Prostate gland (tissue), 2 donors: ENCODE measurements at regions of chr6 and their contacts with region 1.

Region 1: DNA sequence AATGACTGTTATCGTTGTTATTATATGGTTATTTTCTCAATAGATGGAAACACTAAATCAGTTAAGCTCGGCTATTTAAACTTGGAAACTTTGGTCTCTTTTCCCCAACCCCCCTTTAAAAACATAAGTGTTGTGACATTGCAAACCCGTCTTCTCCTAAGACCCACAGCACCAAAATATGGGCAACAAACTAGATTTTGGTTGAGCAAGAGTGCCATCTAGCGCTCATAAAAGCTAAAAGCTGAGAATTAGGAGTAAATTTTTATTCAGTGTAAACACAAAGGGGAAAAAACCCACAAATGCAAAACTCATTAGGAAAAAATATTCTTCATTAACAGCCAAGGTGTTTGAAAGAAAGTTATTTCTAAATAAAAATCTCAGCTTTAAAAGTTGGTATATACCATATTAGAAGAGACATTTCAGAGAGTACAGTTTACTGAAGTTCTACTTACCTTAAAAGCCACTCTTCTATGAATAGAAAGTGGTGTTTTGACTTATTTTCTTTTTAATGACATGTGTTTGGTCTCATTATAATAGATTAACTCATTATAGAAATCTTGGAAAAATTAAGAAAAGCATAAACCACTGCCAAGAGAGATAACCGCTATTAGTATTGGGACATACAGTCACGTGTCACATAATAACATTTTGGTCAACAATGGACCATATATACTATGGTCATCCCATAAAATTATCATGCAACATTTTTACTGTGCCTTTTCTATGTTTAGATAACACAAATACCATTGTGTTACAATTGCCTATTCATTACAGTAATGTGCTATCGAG is 21.1 kb downstream of the SESN1 start:
- DNase-seq: peak; percentile 54
- H3K4me3 ChIP-seq: no peak overlapping the region
- H3K27ac ChIP-seq: no peak overlapping the region
- H3K4me1 ChIP-seq: no peaks in the 10 kb centered on the region
- H3K27me3 ChIP-seq: no peaks in the 10 kb centered on the region
- CTCF ChIP-seq: peak in 3 of 4 experiments; percentile 54 to 74 (median 69)
- POLR2A ChIP-seq: no peak

Region 2: DNA sequence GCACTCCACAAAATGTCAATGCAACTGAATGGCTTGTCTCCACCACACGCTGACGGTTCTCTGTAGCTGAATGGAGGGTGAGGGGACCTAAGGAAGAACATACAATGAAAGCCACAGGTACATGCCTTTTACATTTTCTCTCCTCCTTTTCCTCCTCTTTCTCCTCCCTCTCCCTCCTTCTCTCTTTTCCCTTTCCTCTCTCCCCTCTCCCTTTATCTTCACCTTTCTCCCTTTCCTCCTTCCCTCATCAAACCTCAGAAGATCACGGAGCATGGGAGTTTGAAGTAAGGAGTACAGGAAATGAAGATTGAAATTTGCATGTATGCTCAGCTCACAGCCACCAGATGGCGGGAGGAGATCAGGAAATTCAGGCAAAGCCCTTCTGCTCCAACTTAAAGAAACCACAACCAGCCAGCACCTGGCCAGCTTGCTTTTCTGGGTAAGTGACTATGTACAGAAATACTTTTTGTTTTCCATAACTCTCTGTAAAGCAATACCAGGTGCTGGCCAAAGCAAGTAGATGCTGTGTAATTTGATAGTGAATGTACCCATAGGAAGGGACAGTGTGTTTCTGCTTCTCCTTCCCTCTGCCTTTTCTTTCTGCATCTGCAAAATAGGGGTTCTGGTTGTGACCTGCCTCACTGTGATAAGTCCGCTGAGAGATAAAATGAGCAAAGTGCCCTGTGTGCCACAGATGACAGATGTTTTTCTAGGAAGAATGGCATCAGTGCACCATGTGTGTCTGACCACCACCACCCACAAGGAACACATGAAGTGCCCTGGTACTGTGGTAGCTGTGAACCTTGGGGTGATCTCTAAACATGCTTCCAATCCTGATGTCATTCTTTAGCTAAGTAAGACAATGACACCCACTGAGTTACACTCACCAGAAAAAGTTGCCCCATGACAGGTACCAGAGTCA is 531.4 kb before region 1 on chr6:
- intact Hi-C with region 1: loop called (anchors 5 kb)
- DNase-seq: peak; percentile 77
- H3K4me3 ChIP-seq: no peak overlapping the region
- H3K27ac ChIP-seq: no peak overlapping the region
- H3K4me1 ChIP-seq: no peaks in the 10 kb centered on the region
- H3K27me3 ChIP-seq: no peaks in the 10 kb centered on the region
- CTCF ChIP-seq: peak; percentile 61 to 97 (median 94)
- POLR2A ChIP-seq: no peak

Region 3: GRCh38 chr6:108782179-108783041 is 291.1 kb before region 1 on chr6:
- intact Hi-C with region 1: loop called (anchors 2 kb)
- DNase-seq: peak; percentile 90
- H3K4me3 ChIP-seq: peak overlapping the region; percentile 35 to 39
- H3K27ac ChIP-seq: peak overlapping the region; percentile 63 to 67
- H3K4me1 ChIP-seq: peaks cover 3% of the 10 kb centered on the region
- H3K27me3 ChIP-seq: no peaks in the 10 kb centered on the region
- CTCF ChIP-seq: peak; percentile 55 to 81 (median 80)
- POLR2A ChIP-seq: no peak

Region 4: GRCh38 chr6:108848116-108848868 is 225.2 kb before region 1 on chr6 and contains the start of gene ARMC2:
- intact Hi-C with region 1: loop called (anchors 10 kb)
- DNase-seq: peak; percentile 79
- H3K4me3 ChIP-seq: peak within 1 kb of the TSS; percentile 50 to 58
- H3K27ac ChIP-seq: peak within 1 kb of the TSS; percentile 59 to 62
- H3K4me1 ChIP-seq: no peaks in the 10 kb centered on the region
- H3K27me3 ChIP-seq: no peaks in the 10 kb centered on the region
- CTCF ChIP-seq: no peak
- POLR2A ChIP-seq: peak; percentile 61
- total RNA-seq, gene ARMC2: 2.0 to 8.4 TPM

Region 5: DNA sequence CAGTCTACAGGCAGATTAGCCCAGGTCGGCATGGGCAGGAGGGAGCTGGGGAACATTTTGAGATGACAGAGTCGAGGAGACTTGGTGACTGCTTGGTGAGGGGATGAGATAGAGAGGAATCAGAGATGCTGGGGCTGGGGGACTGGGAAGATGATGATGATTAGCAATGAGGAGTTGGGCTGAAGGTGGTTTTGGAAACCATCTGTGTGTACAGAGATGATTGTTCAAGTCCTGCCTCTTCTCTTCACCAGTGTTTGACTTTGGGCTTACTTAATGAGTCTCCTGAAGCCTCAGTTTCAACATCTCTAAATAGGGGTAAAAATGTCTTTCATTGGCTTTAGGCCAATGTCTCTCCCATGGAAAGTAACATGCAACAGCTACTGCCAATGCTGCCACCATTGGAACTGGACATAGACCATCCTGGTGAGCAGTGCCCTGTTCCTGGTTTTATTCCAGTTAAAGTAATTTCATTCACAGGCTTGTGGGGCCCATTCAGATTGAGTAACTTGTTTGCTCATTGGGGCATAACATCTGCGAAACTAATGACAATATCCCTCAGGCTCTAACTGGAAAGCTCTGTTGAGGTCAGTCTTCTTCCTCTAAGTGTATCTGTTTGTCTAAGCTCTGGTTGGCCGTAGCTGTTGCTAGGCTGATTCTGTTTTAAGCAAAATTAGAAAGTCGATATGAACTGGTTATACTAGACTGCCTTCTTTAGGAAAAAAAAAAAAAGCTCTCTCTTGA is 126.3 kb before region 1 on chr6:
- intact Hi-C with region 1: loop called (anchors 5 kb)
- DNase-seq: peak; percentile 80
- H3K4me3 ChIP-seq: no peak overlapping the region
- H3K27ac ChIP-seq: peak overlapping the region; percentile 73 to 75
- H3K4me1 ChIP-seq: peaks cover 10% of the 10 kb centered on the region
- H3K27me3 ChIP-seq: no peaks in the 10 kb centered on the region
- CTCF ChIP-seq: no peak
- POLR2A ChIP-seq: no peak

Region 6: DNA sequence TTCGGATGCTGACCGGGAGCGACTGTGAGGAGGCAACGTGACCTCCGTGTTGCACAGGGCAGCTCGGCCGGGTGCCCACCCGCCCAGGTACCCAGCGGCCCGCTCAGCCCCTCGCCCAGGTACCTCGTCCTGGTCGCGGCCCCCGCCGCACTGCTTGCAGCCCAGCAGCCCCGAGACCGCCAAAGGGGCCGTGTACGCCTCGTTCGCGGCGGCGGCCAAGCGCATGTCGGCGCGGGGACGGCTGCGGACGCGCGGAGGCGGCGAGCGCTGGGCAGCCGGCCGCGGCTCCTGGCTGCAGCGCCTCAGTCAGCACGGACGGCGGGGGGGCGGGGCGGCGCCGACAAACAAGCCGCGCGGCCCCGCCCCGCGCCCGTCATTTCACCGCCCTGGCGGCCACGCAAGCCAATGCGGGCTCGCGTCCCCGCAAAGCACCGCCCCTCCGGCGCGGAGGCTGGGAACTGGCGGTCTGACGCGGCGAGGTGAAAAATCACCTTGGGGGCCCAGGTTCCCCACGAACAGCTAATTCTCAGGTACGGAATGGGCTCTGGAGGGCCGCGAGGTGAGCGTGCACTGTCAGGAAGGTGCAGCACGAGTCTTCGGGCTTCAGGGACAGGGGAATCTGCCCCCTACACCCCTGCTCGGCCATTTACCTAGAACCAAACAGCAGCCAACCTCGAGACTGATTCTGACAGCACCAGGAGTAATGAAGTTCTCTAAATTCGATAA is 64.1 kb before region 1 on chr6:
- intact Hi-C with region 1: loop called (anchors 10 kb)
- DNase-seq: peak; percentile 94
- H3K4me3 ChIP-seq: peak overlapping the region; percentile 97 to 98
- H3K27ac ChIP-seq: peak overlapping the region; percentile 94 to 96
- H3K4me1 ChIP-seq: no peaks in the 10 kb centered on the region
- H3K27me3 ChIP-seq: no peaks in the 10 kb centered on the region
- CTCF ChIP-seq: peak; percentile 15 to 92 (median 48)
- POLR2A ChIP-seq: peak; percentile 90